Activated CD8-positive, alpha-beta memory T cell treated with anti-CD3 and anti-CD28 coated beads, Interleukin-2, amount 10 ng/mL, durations not matched to agents 7 days and 5 days (primary cell): ENCODE measurements at regions of chr18 and their contacts with region 1.

Region 1: DNA sequence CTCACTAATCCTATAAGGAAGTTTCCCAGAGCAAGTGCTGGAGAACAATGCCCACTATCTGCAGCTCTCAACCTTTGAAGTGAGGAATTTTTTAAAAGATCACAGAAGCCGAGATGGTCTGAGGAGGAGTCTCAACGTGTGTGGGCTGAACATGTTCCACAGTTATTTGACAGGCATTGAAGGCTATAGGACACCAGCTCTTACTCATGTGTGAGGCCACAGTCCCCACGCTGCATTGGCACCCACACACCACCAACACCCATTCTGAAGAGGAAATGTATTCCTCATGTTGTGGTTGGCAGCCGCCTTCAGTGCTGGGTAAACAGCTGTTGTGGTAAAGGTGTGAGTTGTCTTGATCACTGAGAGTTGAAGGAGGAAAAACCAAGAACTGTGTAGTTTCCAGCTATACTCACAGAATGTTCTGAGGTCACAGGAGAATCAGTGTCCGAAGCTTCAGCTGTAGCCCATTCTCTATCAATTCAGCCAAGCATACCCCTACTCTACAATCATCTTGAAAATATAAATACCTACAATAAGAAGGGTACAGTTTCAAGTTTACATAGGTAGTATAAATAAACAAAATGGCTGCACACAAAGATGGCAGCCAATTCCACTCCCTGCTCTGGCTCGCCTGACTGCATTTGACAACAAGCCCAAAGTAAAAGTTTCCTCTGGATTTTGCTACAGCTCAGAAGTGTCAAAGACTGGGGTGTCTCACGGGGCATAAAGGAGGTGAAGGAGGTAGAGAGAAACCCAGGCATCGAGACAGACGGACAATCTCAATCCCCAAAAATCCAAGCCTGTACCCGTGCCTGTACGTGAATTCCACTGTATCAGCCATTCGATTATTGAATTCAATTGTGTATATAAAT is 12.1 kb downstream of the CD226 start:
- DNase-seq: peak; percentile 96
- ATAC-seq: peak; percentile 94
- H3K4me3 Mint-ChIP-seq: no peak overlapping the region
- H3K27ac Mint-ChIP-seq: no peak overlapping the region
- H3K4me1 Mint-ChIP-seq: peaks cover 39% of the 10 kb centered on the region
- H3K27me3 Mint-ChIP-seq: peaks cover 2% of the 10 kb centered on the region

Region 2: DNA sequence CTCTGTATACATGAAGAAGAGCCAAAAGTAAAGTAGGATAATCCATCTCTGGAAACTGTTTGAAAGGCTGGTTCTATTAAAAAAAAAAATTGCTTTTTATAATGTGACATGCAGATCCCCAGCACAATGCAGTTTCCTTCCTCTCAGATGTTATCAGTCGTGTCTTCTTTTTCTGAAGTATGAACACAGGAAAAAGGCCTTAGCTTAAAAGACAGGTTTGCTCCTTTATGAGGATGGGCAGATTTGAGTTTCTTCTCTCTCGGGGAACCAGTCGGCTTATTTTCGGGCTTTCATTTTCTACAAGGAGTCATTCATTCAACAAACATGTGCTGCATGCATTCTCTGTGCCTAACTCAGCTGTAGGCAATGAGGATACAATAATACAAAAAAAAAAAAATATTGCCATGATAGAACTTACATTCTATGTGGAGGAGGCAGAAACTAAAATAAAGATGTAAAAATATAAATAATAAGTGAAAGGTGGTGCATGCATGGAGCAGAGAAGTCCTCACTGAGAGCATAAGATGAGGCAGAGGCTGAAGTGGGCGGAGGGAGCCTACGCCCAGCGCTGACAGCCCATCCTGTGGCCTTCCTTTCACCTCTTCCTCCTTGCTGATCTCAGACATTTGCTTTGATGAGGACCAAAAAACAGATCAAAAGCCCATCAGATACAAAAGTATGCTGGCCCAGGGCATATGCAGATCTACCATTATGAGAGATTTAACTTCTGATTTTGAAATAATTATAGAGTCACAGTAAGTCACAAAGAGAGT is 12.0 kb after region 1 on chr18 and contains the start of gene CD226:
- CTCF ChIA-PET with region 1: interaction called, 35 read pairs
- DNase-seq: peak; percentile 74
- ATAC-seq: peak; percentile 54
- H3K4me3 Mint-ChIP-seq: no peak within 1 kb of the TSS
- H3K27ac Mint-ChIP-seq: no peak within 1 kb of the TSS
- H3K4me1 Mint-ChIP-seq: peaks cover 37% of the 10 kb centered on the region
- H3K27me3 Mint-ChIP-seq: no peaks in the 10 kb centered on the region
- total RNA-seq, gene CD226: 83.3 to 95.4 TPM

Region 3: DNA sequence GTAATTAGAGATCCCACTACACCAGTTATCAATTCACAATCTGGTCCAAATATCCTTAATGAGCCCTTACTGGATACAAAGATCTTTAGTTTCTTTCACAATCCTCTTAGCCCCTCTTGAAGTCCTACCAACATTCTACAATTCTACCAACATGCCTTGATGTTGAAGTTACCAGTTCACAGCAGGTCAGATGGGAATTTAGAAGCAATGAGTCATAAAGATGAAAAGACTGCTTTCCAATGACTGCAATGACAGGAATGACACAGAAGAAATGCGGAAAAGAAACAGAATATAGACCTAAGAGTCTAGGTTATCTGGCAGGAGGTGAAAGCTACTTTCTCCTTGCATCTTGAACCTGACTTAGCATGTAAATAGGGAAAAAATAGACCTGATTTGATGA is 245.5 kb after region 1 on chr18:
- CTCF ChIA-PET with region 1: no interaction called
- DNase-seq: no peak
- ATAC-seq: no peak
- H3K4me3 Mint-ChIP-seq: no peak overlapping the region
- H3K27ac Mint-ChIP-seq: no peak overlapping the region
- H3K4me1 Mint-ChIP-seq: peaks cover 15% of the 10 kb centered on the region
- H3K27me3 Mint-ChIP-seq: no peaks in the 10 kb centered on the region